ENCODE measurements at regions of chr4 and their contacts with region 1.

Region 1: GRCh38 chr4:183471946-183472708 is 27.7 kb downstream of the CDKN2AIP start:
- DNase-seq: peak; percentile 51 to 81 (median 71)
- ATAC-seq: peak; percentile 89
- H3K4me3 ChIP-seq: no peak overlapping the region
- H3K4me3 Mint-ChIP-seq: peak overlapping the region in 1 of 10 donors; percentile 8
- H3K27ac ChIP-seq: no peak overlapping the region
- H3K27ac Mint-ChIP-seq: no peak overlapping the region
- H3K4me1 ChIP-seq: no peaks in the 10 kb centered on the region
- H3K4me1 Mint-ChIP-seq: peaks cover 0 to 9% (median 5%) of the 10 kb centered on the region in 7 donors
- H3K27me3 ChIP-seq: no peaks in the 10 kb centered on the region
- H3K27me3 Mint-ChIP-seq: peaks cover 0 to 10% (median 0%) of the 10 kb centered on the region in 5 donors

Region 2: DNA sequence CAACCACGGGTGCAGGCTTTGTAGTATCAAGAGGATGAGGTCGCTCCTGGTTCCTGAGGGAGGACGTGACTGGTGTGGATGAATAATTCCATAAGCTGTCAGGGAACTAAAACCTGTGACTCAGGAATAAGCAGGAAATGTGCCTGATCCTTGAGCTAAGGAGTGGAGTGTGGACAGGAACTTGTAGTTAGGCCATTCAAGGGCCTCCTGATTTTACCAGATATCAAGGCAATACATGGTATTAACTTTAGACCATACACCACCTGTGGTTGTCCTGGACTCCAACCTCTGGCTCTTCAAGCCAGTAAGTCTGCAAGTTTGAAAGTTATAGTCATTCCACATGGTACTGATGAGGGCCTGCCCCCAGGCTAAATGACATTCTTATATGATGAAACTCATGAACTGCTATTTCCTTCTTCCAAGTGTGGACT is 20.7 kb after region 1 on chr4:
- CTCF ChIA-PET with region 1: no interaction called
- POLR2A ChIA-PET with region 1: no interaction called
- intact Hi-C with region 1: no loop called
- DNase-seq: no peak
- ATAC-seq: no peak
- H3K4me3 ChIP-seq: no peak overlapping the region
- H3K4me3 Mint-ChIP-seq: no peak overlapping the region
- H3K27ac ChIP-seq: no peak overlapping the region
- H3K27ac Mint-ChIP-seq: no peak overlapping the region
- H3K4me1 ChIP-seq: no peaks in the 10 kb centered on the region
- H3K4me1 Mint-ChIP-seq: no peaks in the 10 kb centered on the region
- H3K27me3 ChIP-seq: no peaks in the 10 kb centered on the region
- H3K27me3 Mint-ChIP-seq: no peaks in the 10 kb centered on the region

Region 3: GRCh38 chr4:183602557-183603027 is 130.5 kb after region 1 on chr4:
- CTCF ChIA-PET with region 1: interaction called, 8 read pairs
- POLR2A ChIA-PET with region 1: no interaction called
- intact Hi-C with region 1: loop called (anchors 1 kb)
- DNase-seq: peak in 5 of 9 donors; percentile 2 to 24 (median 6)
- ATAC-seq: no peak
- H3K4me3 ChIP-seq: no peak overlapping the region
- H3K4me3 Mint-ChIP-seq: no peak overlapping the region
- H3K27ac ChIP-seq: no peak overlapping the region
- H3K27ac Mint-ChIP-seq: no peak overlapping the region
- H3K4me1 ChIP-seq: no peaks in the 10 kb centered on the region
- H3K4me1 Mint-ChIP-seq: peaks cover 0 to 3% (median 0%) of the 10 kb centered on the region in 7 donors
- H3K27me3 ChIP-seq: no peaks in the 10 kb centered on the region
- H3K27me3 Mint-ChIP-seq: peaks cover 0 to 8% (median 4%) of the 10 kb centered on the region in 5 donors

Region 4: GRCh38 chr4:183659029-183659871 is 187.1 kb after region 1 on chr4 and contains the starts of genes RWDD4 and TRAPPC11:
- CTCF ChIA-PET with region 1: no interaction called
- POLR2A ChIA-PET with region 1: interaction called, 3 read pairs
- intact Hi-C with region 1: loop called in 1 of 2 experiments (anchors 1 kb)
- DNase-seq: peak; percentile 83 to 97 (median 95)
- ATAC-seq: peak; percentile 99
- H3K4me3 ChIP-seq: peak within 1 kb of the TSS; percentile 87
- H3K4me3 Mint-ChIP-seq: peak within 1 kb of the TSS; percentile 91 to 98 (median 96)
- H3K27ac ChIP-seq: peak within 1 kb of the TSS; percentile 96
- H3K27ac Mint-ChIP-seq: peak within 1 kb of the TSS; percentile 90 to 99 (median 95)
- H3K4me1 ChIP-seq: peaks cover 14 to 19% of the 10 kb centered on the region in 2 donors
- H3K4me1 Mint-ChIP-seq: peaks cover 35 to 48% (median 38%) of the 10 kb centered on the region in 7 donors
- H3K27me3 ChIP-seq: no peaks in the 10 kb centered on the region
- H3K27me3 Mint-ChIP-seq: no peaks in the 10 kb centered on the region
- total RNA-seq, gene RWDD4: 9.3 to 15.8 (median 11.6) TPM
- total RNA-seq, gene TRAPPC11: 26.3 to 48.8 (median 35.6) TPM

Region 5: GRCh38 chr4:183840311-183840710 is 368.2 kb after region 1 on chr4:
- CTCF ChIA-PET with region 1: no interaction called
- POLR2A ChIA-PET with region 1: no interaction called
- intact Hi-C with region 1: loop called in 1 of 2 experiments (anchors 10 kb)
- DNase-seq: peak; percentile 27 to 62 (median 57)
- ATAC-seq: peak; percentile 70
- H3K4me3 ChIP-seq: no peak overlapping the region
- H3K4me3 Mint-ChIP-seq: no peak overlapping the region
- H3K27ac ChIP-seq: no peak overlapping the region
- H3K27ac Mint-ChIP-seq: no peak overlapping the region
- H3K4me1 ChIP-seq: no peaks in the 10 kb centered on the region
- H3K4me1 Mint-ChIP-seq: no peaks in the 10 kb centered on the region
- H3K27me3 ChIP-seq: no peaks in the 10 kb centered on the region
- H3K27me3 Mint-ChIP-seq: peaks cover 6 to 26% (median 20%) of the 10 kb centered on the region in 5 donors

Region 6: DNA sequence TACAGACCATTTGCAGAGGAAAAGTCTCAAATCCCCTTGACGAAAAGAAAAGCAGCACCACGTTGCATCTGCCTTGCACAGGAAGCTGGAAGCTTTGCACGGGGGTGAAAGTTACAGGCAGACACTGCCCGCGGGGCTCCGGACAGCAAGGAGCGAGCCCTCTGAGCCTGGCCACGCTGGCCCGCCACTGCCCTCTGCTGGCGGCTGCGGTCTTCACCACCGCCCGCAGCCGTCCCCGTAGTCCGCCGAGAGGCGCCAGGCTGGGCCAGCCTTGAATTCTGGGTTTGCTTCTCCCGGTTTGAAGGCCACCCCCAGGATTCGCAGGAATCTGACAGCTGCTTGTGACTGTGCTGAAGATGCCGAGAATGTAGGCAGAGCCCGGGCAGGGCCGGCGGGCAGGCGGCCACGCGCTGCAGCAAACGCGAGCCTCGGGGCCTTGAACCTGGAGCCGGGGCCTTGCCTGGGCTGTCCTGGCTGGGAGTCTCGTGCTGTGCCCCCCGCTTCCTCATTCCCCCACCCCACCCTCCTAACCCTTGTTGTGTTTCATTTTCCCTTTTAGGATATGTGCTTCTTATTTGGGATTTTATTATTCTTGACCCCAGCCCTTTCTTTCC is 696.4 kb after region 1 on chr4:
- CTCF ChIA-PET with region 1: no interaction called
- POLR2A ChIA-PET with region 1: no interaction called
- intact Hi-C with region 1: loop called (anchors 1 to 5 kb)
- DNase-seq: peak in 7 of 9 donors; percentile 15 to 77 (median 33)
- ATAC-seq: peak; percentile 89
- H3K4me3 ChIP-seq: no peak overlapping the region
- H3K4me3 Mint-ChIP-seq: peak overlapping the region in 2 of 10 donors; percentile 37 to 64
- H3K27ac ChIP-seq: no peak overlapping the region
- H3K27ac Mint-ChIP-seq: no peak overlapping the region
- H3K4me1 ChIP-seq: no peaks in the 10 kb centered on the region
- H3K4me1 Mint-ChIP-seq: peaks cover 0 to 20% (median 3%) of the 10 kb centered on the region in 7 donors
- H3K27me3 ChIP-seq: peaks cover 0 to 3% of the 10 kb centered on the region in 2 donors
- H3K27me3 Mint-ChIP-seq: peaks cover 55 to 76% (median 67%) of the 10 kb centered on the region in 5 donors

Measured in naive thymus-derived CD4-positive, alpha-beta T cell (primary cell).